Right ventricle myocardium inferior (tissue), 1 donor: ENCODE measurements at regions of chr9 and their contacts with region 1.

Region 1: GRCh38 chr9:104386425-104387069 is 117.5 kb upstream of the OR13F1 start:
- DNase-seq: no peak
- ATAC-seq: no peak

Region 2: DNA sequence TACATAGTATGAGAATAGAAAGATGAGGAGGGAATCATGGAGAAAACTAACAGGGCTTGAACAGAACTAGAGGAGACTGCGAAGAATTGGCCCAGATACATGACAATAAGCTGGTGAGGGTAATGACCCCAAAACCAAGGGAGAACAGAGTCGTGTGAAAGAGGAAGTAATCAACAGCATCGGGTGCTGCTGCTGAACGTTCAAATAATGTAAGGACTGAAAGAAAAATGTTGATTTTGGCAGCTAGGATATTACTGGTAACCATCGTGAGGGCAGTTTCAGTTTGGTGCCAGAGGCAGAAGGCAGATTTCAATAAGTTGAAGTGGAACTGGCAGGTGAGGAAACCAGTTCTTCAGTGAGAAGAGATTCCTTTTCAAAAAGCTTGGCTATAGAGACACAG is 359.3 kb before region 1 on chr9:
- intact Hi-C with region 1: loop called (anchors 10 kb)
- DNase-seq: no peak
- ATAC-seq: no peak

Region 3: GRCh38 chr9:104075801-104076753 is 310.5 kb before region 1 on chr9:
- intact Hi-C with region 1: no loop called
- DNase-seq: no peak
- ATAC-seq: no peak

Region 4: GRCh38 chr9:104177003-104177611 is 209.4 kb before region 1 on chr9:
- intact Hi-C with region 1: loop called (anchors 5 kb)
- DNase-seq: no peak
- ATAC-seq: no peak

Region 5: DNA sequence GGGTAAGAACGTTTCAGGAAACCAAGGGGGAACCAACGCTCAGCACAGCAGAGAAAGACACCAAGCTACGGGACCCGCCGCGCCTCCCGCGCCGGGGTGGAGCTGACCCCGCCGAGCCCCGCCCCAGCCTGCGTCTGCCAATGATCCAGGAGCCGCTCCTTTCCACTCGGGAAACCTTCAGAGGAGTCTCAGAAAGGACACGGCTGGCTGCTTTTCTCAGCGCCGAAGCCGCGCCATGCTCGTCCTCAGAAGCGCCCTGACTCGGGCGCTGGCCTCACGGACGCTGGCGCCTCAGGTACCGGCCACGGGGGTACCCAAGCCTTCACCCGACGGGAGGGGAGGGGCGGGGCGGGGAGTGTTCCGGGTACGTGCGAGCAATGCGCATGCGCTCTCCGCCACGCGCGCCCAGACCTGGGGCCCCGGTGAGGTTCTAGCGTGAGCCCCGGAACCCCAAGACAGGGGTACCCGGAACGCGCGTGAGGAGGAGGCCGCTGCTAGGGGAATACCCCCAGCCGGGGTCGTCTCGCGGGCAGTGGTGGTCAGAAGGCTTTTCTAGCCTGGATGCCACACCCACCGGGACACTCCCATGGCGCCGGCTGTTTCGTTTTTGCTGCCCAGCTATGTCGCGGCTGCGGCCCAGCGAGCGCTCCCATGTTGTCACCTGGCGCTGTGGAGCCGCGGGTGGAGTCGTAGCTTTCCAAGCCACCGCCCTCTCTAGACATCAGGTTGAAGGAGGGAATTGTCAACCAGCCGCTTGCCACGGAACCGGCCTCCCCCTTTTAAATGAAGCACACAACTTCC is 361.2 kb after region 1 on chr9 and contains the start of gene NIPSNAP3A:
- intact Hi-C with region 1: loop called (anchors 10 kb)
- DNase-seq: peak; percentile 94
- ATAC-seq: peak; percentile 97
- total RNA-seq, gene NIPSNAP3A: 21.6 TPM